Activated T-helper 1 cell treated with anti-CD3 and anti-CD28 coated beads, Interleukin-12 subunit alpha, Interleukin-12 subunit beta, Interleukin-2, Interleukin-4 antibody, amounts not matched to agents 30 ng/mL and 10 ng/mL and 1 ng/mL, durations not matched to agents 14 hours and 24 hours and 36 hours (primary cell): ENCODE measurements at regions of chr20 and their contacts with region 1.

Region 1: GRCh38 chr20:47272893-47273590 is 83.5 kb downstream of the ZMYND8 start:
- DNase-seq: peak; percentile 56
- H3K4me3 Mint-ChIP-seq: peak overlapping the region; percentile 70
- H3K27ac Mint-ChIP-seq: peak overlapping the region; percentile 94
- H3K4me1 Mint-ChIP-seq: peaks cover 50% of the 10 kb centered on the region
- H3K27me3 Mint-ChIP-seq: no peaks in the 10 kb centered on the region

Region 2: GRCh38 chr20:47196091-47197081 is 76.7 kb before region 1 on chr20:
- intact Hi-C with region 1: loop called (anchors 1 kb)
- DNase-seq: peak; percentile 67
- H3K4me3 Mint-ChIP-seq: no peak overlapping the region
- H3K27ac Mint-ChIP-seq: no peak overlapping the region
- H3K4me1 Mint-ChIP-seq: peaks cover 16% of the 10 kb centered on the region
- H3K27me3 Mint-ChIP-seq: peaks cover 3% of the 10 kb centered on the region

Region 3: DNA sequence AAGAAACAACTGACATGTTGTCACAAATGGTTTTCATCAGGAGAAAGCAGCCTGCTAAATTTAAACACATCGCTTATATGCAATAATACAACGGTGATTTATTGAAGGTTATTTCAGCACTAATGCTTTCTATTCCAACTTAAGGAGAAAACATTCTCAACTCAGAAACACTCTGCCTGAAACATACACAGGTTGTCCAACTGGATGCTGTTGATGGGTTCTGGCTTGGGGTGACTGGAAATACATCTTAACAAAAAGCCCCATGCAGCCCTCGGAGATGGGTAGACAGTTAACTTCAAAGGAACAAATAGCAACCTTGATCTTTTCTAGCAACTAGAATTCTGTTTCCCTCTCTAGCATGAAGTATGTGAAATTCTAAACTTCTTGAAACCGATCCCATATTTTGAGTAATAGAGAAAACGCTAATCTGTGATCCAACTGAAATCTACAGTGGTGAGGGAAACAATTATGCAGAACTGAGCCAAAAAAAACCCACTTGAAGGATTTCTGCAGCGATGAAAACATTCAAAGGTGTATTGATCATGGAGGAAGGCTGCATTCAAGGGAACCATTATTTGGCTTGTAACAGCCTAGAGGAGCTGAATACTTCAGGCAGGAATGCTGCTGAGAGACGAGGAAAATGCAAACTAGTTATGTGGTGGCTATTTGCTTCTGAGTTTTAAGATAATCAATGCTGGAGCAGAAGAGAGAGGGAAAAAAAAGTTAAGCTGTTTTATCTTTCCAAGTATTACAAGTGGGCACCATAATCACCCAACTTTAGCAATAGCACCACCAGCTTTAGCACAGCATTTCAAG is 76.5 kb after region 1 on chr20:
- intact Hi-C with region 1: loop called (anchors 1 kb)
- DNase-seq: no peak
- H3K4me3 Mint-ChIP-seq: no peak overlapping the region
- H3K27ac Mint-ChIP-seq: no peak overlapping the region
- H3K4me1 Mint-ChIP-seq: peaks cover 6% of the 10 kb centered on the region
- H3K27me3 Mint-ChIP-seq: no peaks in the 10 kb centered on the region

Region 4: GRCh38 chr20:47379433-47380150 is 106.5 kb after region 1 on chr20:
- intact Hi-C with region 1: loop called (anchors 1 kb)
- DNase-seq: no peak
- H3K4me3 Mint-ChIP-seq: no peak overlapping the region
- H3K27ac Mint-ChIP-seq: peak overlapping the region; percentile 82
- H3K4me1 Mint-ChIP-seq: peaks cover 28% of the 10 kb centered on the region
- H3K27me3 Mint-ChIP-seq: no peaks in the 10 kb centered on the region

Region 5: DNA sequence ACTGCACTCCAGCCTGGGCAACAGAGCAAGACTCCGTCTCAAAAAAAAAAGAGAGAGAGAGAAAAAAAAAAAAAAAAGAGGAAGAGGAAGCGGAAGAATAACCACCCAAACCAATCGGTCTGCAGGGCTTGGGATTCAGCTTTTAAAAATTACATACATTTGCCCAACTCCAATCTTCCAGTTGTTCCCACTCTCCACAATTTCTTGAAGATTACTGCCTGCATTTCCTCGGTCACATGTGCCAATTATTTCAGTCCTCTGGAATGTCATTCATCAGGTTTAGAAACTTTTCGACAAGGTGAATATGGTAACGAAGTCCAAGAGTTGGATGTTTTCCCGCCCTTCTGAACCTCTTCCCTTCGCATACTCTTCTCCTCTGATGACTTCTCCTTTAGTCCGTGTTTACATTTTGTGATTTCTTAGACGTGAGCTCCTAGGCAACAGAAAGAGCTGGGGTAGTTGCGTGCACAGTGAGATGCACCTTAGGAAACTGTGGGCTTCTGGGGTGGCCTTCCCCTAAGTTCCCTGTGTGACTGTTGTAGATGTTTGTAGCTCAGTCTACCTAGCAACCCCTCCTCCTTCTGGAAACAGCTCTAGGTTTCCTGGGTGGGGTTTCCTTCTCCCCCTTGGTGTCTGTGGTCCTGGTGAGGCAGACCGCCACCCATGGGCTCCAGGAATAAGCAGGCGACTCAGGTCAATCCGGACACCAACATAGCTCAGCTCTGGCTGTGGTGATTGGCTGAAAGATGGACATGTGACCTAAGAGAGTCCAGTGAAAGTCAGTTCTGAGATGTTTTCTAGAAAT is 165.7 kb after region 1 on chr20:
- intact Hi-C with region 1: no loop called
- DNase-seq: no peak
- H3K4me3 Mint-ChIP-seq: no peak overlapping the region
- H3K27ac Mint-ChIP-seq: peak overlapping the region; percentile 73
- H3K4me1 Mint-ChIP-seq: peaks cover 6% of the 10 kb centered on the region
- H3K27me3 Mint-ChIP-seq: no peaks in the 10 kb centered on the region

Region 6: DNA sequence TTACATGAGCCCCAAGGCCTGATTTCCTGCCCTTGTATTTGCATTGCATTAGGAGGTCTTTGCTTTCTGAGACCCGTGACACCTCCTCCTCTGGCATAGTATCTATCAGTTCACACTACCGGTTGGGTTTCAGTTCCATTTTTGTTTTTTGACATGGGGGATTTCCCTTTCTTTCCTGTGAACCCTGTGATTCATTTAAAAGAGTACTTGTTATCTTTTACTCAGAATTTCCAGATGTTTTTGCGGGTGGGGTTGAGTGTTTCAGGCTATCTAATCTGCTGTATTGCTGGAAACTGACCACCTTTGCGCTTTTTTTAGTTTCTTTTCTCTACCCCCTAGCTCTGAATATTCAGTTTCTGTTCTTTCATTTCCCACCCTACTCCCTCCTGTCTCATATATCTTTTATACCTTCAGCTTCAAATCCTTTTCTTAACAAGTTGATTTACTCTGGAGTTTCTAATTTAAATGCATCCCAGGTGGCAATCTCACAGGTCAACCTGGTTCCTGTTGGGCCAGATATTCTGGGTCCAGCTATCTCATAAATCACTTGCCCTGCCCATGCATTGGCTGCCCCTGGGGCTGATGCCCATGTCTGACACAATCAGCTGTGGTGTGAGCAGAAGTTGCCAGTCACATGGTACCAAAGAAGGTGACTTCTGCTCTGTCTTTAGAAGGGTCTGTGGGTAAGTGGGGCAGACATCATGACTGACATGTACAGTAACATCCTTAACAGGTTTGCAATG is 214.3 kb after region 1 on chr20:
- intact Hi-C with region 1: loop called (anchors 1 kb)
- DNase-seq: peak; percentile 70
- H3K4me3 Mint-ChIP-seq: peak overlapping the region; percentile 68
- H3K27ac Mint-ChIP-seq: peak overlapping the region; percentile 98
- H3K4me1 Mint-ChIP-seq: peaks cover 54% of the 10 kb centered on the region
- H3K27me3 Mint-ChIP-seq: no peaks in the 10 kb centered on the region

Region 7: DNA sequence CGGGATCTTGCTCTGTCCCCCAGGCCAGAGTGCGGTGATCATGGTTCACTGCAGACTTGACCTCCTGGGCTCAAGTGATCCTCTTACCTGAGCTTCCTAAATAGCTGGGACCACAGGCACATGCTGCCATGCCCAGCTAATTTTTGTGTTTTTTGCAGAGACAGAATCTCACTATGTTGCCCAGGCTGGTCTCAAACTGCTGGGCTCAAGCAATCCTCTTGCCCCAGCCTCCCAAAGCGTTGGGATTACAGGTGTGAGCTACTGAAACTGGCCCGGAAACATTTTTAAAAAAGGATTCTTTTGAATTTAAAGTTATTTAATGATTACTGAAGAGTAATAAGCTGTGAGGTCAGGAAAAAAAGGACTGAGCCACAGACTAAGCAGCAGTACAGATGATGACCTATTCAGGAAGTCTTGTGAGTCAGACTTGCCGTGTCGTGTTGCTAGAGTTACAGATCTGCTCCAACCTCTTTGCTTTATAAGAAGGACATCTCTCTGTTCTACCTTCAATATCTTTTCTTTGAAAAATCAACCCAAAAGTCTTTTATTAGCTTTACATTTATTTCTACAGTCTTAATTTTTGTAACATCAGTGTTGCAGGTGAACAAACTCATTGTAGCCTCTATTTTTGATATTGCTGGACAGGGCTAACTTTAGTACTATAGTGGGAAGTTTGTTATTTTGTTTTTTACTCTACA is 337.4 kb after region 1 on chr20:
- intact Hi-C with region 1: loop called (anchors 1 kb)
- DNase-seq: peak; percentile 60
- H3K4me3 Mint-ChIP-seq: peak overlapping the region; percentile 77
- H3K27ac Mint-ChIP-seq: peak overlapping the region; percentile 97
- H3K4me1 Mint-ChIP-seq: peaks cover 84% of the 10 kb centered on the region
- H3K27me3 Mint-ChIP-seq: no peaks in the 10 kb centered on the region